ENCODE measurements at regions of chr11 and their contacts with region 1.

Region 1: GRCh38 chr11:63838678-63839507 is at the start of gene MARK2:
- DNase-seq: peak; percentile 96
- H3K4me3 ChIP-seq: peak within 1 kb of the TSS; percentile 59 to 86 (median 86)
- H3K27ac ChIP-seq: peak within 1 kb of the TSS; percentile 58
- H3K4me1 ChIP-seq: peaks cover 31% of the 10 kb centered on the region
- H3K27me3 ChIP-seq: no peaks in the 10 kb centered on the region
- CTCF ChIP-seq: no peak
- total RNA-seq, gene MARK2: 26.7 to 64.4 TPM

Region 2: DNA sequence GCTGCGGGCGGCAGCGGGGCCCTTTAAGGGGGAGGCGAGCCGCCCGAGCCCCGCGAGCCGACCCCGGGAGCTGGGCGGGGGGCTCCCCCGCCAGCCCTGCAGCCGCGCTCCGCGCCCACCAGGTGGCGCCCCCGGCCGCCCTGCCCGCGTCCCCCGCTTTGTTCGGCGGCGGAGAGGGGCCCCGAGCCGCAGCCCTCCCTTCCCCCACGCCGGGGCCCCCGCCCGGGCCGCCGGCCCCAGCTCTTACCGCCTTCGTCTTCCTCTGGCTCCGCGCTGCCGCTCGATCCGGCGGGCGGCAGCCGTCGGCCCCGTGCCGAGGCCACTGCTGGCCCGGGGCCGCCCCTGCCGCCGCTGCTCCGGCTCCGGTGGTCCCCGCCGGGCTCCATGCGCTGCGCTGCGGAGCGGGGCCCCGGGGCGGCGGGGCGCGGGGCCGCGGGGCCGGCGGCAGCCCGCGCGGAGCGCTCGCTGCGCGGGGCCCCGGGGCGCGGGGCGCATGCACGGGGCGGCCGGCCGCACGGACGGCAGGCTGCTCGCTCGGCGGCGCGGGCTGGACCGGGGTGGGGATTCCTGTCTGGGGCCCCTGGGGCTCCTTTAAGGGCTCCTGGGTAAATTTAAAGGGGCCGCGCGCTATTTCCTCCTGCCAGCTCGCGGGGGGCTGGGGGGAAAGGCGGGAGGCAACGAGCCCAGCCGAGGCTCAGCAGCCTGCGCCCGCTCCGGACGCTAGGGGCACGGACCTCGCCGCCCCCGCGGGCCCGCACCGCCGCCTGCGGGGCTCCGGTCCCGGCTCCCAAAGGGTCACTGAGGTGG is 70.5 kb before region 1 on chr11 and contains the start of gene ZFTA:
- CTCF ChIA-PET with region 1: no interaction called
- dilution Hi-C with region 1: no loop called
- in situ Hi-C with region 1: no loop called
- intact Hi-C with region 1: loop called (anchors 1 kb)
- DNase-seq: peak; percentile 43
- H3K4me3 ChIP-seq: peak within 1 kb of the TSS; percentile 65 to 84 (median 71)
- H3K27ac ChIP-seq: no peak within 1 kb of the TSS
- H3K4me1 ChIP-seq: peaks cover 11% of the 10 kb centered on the region
- H3K27me3 ChIP-seq: no peaks in the 10 kb centered on the region
- CTCF ChIP-seq: peak; percentile 20 to 47
- total RNA-seq, gene ZFTA: 4.7 to 10.0 TPM

Region 3: GRCh38 chr11:63888170-63889086 is 49.5 kb after region 1 on chr11:
- CTCF ChIA-PET with region 1: no interaction called
- dilution Hi-C with region 1: no loop called
- in situ Hi-C with region 1: no loop called
- intact Hi-C with region 1: loop called (anchors 5 kb)
- DNase-seq: peak; percentile 87
- H3K4me3 ChIP-seq: peak overlapping the region; percentile 47 to 53 (median 53)
- H3K27ac ChIP-seq: peak overlapping the region; percentile 85
- H3K4me1 ChIP-seq: peaks cover 34% of the 10 kb centered on the region
- H3K27me3 ChIP-seq: no peaks in the 10 kb centered on the region
- CTCF ChIP-seq: no peak

Region 4: DNA sequence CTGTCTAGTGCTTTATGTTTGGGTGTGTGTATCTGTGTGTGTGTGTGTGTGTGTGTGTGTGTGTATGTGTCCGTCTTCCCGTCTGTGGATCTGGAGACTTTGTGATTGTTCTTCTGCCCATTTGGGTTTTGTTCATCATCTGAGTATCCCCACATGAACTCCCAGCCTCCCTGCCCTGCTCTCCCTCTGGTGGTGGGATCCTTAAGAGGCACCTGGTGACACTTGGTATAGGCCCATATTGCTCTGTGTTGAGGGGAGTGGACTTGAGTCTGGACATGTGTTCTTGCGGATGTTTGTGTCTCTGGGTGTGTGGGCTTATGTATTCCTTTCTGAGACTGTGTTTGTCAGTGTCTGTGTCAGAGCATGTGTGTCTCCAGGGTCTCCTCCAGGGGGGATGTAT is 62.8 kb after region 1 on chr11:
- CTCF ChIA-PET with region 1: no interaction called
- dilution Hi-C with region 1: loop called (anchors 5 kb)
- in situ Hi-C with region 1: no loop called
- intact Hi-C with region 1: loop called (anchors 2 kb)
- DNase-seq: no peak
- H3K4me3 ChIP-seq: no peak overlapping the region
- H3K27ac ChIP-seq: no peak overlapping the region
- H3K4me1 ChIP-seq: no peaks in the 10 kb centered on the region
- H3K27me3 ChIP-seq: no peaks in the 10 kb centered on the region
- CTCF ChIP-seq: peak; percentile 15 to 46

Region 5: GRCh38 chr11:63945477-63946163 is 106.7 kb after region 1 on chr11:
- CTCF ChIA-PET with region 1: interaction called, 10 read pairs
- dilution Hi-C with region 1: no loop called
- in situ Hi-C with region 1: loop called (anchors 5 to 10 kb)
- intact Hi-C with region 1: loop called (anchors 1 kb)
- DNase-seq: peak; percentile 64
- H3K4me3 ChIP-seq: no peak overlapping the region
- H3K27ac ChIP-seq: no peak overlapping the region
- H3K4me1 ChIP-seq: peaks cover 3% of the 10 kb centered on the region
- H3K27me3 ChIP-seq: no peaks in the 10 kb centered on the region
- CTCF ChIP-seq: peak; percentile 54 to 68

Region 6: GRCh38 chr11:64021757-64022093 is 182.8 kb after region 1 on chr11:
- CTCF ChIA-PET with region 1: no interaction called
- dilution Hi-C with region 1: no loop called
- in situ Hi-C with region 1: no loop called
- intact Hi-C with region 1: loop called (anchors 1 kb)
- DNase-seq: no peak
- H3K4me3 ChIP-seq: no peak overlapping the region
- H3K27ac ChIP-seq: no peak overlapping the region
- H3K4me1 ChIP-seq: peaks cover 3% of the 10 kb centered on the region
- H3K27me3 ChIP-seq: peaks cover 3% of the 10 kb centered on the region
- CTCF ChIP-seq: no peak